Calu3 (cell line): ENCODE measurements at regions of chr2 and their contacts with region 1.

Region 1: GRCh38 chr2:210072922-210073509 is 70.6 kb downstream of the RPE start:
- DNase-seq: peak; percentile 7
- H3K4me3 Mint-ChIP-seq: no peak overlapping the region
- H3K27ac Mint-ChIP-seq: no peak overlapping the region
- H3K4me1 Mint-ChIP-seq: no peaks in the 10 kb centered on the region
- H3K27me3 Mint-ChIP-seq: no peaks in the 10 kb centered on the region
- CTCF ChIP-seq: peak; percentile 53

Region 2: DNA sequence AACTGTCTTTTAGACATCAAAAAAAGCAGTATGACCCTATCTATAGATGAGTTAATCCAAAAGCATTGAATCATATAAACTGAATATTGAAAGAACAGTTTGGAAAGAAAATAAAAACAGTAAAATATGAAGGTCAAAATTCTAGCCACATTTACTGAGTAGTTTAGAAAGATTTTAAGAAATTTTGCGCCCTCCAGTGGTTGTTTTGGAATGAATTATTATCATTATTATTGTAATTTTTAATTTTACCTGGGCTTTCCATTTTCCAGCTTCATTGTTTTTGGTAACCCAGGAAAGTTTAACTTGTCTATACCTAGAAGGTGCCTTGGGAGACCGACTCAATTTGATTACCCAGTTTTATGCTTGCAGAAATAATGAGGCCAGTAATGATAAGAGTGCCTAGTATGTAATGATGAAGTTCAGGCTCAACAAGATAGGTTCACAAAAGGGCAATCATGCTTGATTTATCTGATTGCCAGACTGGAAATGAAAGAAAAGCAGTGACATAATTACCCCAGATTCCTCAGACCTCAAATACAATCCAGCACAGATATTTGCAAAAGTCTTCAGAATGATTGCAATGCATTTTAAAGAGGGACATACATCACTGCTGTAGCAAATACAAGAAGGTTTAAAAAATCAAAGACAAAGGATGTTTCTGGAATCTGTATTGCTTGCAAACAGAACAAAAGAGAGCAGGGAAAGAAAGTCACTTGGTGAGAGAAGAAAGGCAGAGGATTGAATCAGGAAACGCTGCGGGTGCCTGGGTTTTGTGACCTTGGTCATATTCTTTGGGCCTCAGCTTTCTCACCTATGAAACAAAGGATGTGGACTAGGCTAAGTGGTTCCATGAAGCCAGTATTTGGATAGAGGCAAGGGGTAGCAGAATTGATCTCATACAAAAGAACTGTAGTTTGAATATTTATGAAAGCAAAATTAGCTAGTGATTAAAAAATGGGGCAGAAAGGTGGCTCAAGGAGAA is 495.3 kb before region 1 on chr2:
- CTCF ChIA-PET with region 1: no interaction called
- intact Hi-C with region 1: no loop called
- DNase-seq: peak; percentile 20
- H3K4me3 Mint-ChIP-seq: no peak overlapping the region
- H3K27ac Mint-ChIP-seq: no peak overlapping the region
- H3K4me1 Mint-ChIP-seq: no peaks in the 10 kb centered on the region
- H3K27me3 Mint-ChIP-seq: no peaks in the 10 kb centered on the region
- CTCF ChIP-seq: peak; percentile 32

Region 3: DNA sequence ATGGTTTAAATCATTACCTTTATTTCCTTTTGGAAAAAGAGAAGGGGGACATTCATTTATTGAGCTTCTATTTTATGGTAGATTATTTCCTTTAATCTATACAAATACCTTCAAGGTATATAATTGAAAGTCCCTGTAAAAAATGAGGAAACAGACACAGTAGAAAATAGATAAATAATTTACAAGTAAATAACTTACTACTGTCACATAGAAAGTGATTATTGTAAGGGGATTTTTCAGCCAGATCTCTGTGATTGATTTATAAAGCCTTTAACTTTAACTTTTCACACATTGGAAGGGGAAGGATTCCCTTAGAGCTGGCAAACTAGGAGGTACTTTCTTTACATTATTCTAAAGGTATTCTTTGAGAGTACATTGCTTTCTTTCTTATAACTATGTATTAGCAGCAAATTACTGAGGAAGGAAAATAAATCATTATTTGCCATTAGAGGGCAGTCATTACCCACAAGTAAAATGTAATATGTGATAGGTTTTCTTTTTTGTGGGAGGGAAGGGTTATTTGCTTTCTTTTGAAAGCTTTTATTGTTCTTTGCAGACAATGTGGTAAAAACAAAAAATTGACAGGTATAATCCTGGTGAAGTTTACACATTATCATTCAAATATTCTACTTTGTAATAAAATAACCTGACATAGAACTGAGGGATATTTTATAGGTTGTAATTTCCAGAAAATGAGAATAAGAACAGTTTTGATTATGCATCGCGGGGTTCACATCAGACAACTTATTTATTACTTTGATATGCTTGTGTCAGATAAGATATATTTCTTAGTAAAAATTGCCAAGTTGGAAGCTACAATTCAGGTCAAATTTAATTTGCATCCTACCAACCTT is 95.4 kb before region 1 on chr2:
- CTCF ChIA-PET with region 1: no interaction called
- intact Hi-C with region 1: loop called (anchors 2 kb)
- DNase-seq: no peak
- H3K4me3 Mint-ChIP-seq: no peak overlapping the region
- H3K27ac Mint-ChIP-seq: no peak overlapping the region
- H3K4me1 Mint-ChIP-seq: peaks cover 13% of the 10 kb centered on the region
- H3K27me3 Mint-ChIP-seq: no peaks in the 10 kb centered on the region
- CTCF ChIP-seq: peak; percentile 64